ENCODE measurements at regions of chr21 and their contacts with region 1.

Region 1: DNA sequence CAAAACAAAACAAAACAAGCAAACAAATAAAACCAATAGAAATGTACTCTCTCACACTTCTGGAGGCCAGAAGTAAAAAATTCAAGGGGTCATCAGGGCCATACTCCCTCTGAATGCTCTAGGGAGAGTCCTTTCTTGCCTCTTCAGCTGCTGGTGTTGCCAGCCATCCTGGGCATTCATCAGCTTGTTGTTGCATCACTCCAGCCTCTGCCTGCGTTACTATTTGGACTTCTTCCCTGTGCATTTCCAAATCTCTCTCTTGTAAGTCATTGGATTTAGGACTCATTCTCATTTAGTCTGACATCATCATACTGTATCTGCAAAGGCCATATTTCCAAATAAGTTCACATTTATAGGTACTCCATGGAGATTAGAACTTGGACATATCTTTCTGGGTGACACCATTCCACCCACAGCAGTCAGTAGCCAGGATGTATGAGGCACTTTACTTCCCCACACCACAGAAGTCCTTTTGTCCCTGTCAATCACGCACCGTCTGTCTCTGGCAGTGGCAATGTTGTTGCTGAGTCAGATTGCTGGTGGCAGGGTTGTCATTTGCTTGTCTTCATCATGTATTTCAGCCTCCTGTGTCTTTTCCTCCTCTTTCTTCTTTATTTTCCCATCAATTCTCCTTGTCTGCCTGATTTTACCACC is 151.0 kb upstream of the KCNJ6 start:
- DNase-seq: no peak
- H3K4me3 ChIP-seq: no peak overlapping the region
- H3K4me1 ChIP-seq: no peaks in the 10 kb centered on the region
- H3K27me3 ChIP-seq: no peaks in the 10 kb centered on the region

Region 2: GRCh38 chr21:37800456-37801061 is 266.7 kb before region 1 on chr21:
- in situ Hi-C with region 1: no loop called
- DNase-seq: no peak
- H3K4me3 ChIP-seq: no peak overlapping the region
- H3K4me1 ChIP-seq: no peaks in the 10 kb centered on the region
- H3K27me3 ChIP-seq: no peaks in the 10 kb centered on the region

Region 3: GRCh38 chr21:38159355-38159754 is 92.1 kb after region 1 on chr21:
- in situ Hi-C with region 1: loop called (anchors 25 kb)
- DNase-seq: peak in 1 of 2 experiments; percentile 24
- H3K4me3 ChIP-seq: no peak overlapping the region
- H3K4me1 ChIP-seq: no peaks in the 10 kb centered on the region
- H3K27me3 ChIP-seq: no peaks in the 10 kb centered on the region